Activated CD8-positive, alpha-beta T cell treated with anti-CD3 and anti-CD28 coated beads, Interleukin-2, amount 10 ng/mL, durations not matched to agents 7 days and 5 days (primary cell): ENCODE measurements at regions of chr10 and their contacts with region 1.

Region 1: DNA sequence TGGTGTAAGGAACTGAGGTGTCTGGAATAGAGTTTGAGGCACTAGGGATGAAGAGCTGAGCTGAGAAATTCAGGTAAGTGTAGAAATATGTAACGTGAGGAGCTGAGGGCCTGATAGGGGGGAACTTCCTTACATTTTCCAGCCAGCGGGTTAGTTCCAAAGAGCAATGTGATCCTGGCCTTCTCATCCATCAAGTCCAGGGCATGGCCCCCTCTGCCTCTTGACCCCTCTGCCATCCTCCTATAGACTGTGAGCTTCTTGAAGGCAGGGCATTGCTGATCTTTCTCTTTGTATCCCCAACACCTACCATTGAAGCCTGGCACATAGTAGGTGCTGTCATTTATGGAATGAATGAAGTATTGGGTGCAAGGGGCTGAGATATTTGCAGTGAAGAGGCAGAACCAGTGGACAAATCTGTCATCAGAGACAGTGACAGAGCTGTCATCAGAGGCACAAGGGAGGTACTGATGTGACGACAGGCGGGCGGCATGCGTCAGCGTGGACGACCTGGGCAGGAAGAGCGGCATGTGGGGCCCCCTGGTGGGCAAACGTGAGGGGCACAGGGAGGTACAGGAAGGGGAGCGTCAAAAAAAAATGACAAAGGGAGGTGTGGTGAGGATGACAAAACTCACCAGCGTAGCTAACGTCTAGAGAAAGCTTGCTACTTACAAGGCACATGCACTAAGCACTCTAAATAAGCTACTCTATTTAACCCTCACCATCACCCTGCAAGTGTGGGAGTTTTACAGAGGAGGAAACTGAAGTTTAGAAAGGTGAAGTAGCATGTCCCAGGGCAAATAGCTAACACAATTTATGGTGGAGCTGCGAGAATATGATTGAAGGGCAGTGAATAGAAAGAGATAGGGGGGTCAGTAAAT is 5.2 kb upstream of the CAMK2G start:
- DNase-seq: peak; percentile 97
- ATAC-seq: peak; percentile 93
- H3K4me3 Mint-ChIP-seq: no peak overlapping the region
- H3K27ac Mint-ChIP-seq: peak overlapping the region; percentile 61
- H3K4me1 Mint-ChIP-seq: peaks cover 53% of the 10 kb centered on the region
- H3K27me3 Mint-ChIP-seq: peaks cover 6% of the 10 kb centered on the region

Region 2: GRCh38 chr10:73743905-73744663 is 135.5 kb before region 1 on chr10 and contains the start of gene SEC24C:
- CTCF ChIA-PET with region 1: interaction called, 11 read pairs
- POLR2A ChIA-PET with region 1: interaction called, 5 read pairs
- DNase-seq: peak; percentile 97
- ATAC-seq: peak; percentile 95
- H3K4me3 Mint-ChIP-seq: peak within 1 kb of the TSS; percentile 99
- H3K27ac Mint-ChIP-seq: peak within 1 kb of the TSS; percentile 100
- H3K4me1 Mint-ChIP-seq: peaks cover 30% of the 10 kb centered on the region
- H3K27me3 Mint-ChIP-seq: no peaks in the 10 kb centered on the region
- total RNA-seq, gene SEC24C: 88.9 to 94.6 TPM

Region 3: DNA sequence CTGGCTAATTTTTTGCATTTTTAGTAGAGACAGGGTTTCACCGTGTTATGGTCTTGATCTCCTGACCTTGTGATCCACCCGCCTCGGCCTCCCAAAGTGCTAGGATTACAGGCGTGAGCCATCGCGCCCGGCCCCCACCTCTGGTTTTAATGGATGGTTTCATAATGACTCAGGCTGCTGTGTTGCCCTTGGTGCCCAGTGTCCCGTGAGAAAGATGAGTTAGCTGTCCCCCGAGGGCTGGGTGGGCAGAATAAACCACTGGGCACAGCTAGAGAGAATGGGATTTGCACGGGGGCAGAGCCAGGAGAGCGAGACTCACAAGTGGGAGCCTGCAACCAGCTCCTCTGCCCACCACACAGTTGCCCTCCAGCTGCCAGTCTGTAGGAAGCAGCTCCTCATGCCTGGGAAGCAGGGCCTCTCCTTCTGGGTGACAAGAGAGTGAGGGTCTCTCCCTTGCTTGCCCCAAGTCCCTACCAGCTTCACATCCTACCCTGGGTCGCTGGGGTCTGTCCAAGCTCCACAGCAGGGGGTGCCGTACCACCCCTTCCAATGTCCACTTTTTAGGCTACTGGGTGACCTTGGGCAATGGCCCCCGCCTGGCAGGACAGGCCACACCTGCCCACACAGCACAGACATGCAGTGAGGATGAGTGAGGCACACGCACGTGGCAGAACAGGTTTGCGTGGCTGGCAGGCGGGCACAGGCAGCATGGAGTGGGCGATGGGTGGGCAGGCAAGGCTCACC is 52.0 kb before region 1 on chr10:
- CTCF ChIA-PET with region 1: interaction called, 11 read pairs
- POLR2A ChIA-PET with region 1: no interaction called
- DNase-seq: no peak
- ATAC-seq: no peak
- H3K4me3 Mint-ChIP-seq: no peak overlapping the region
- H3K27ac Mint-ChIP-seq: no peak overlapping the region
- H3K4me1 Mint-ChIP-seq: no peaks in the 10 kb centered on the region
- H3K27me3 Mint-ChIP-seq: no peaks in the 10 kb centered on the region

Region 4: GRCh38 chr10:73865459-73866442 is 13.8 kb before region 1 on chr10:
- CTCF ChIA-PET with region 1: interaction called, 228 read pairs
- POLR2A ChIA-PET with region 1: interaction called, 14 read pairs
- DNase-seq: peak; percentile 72
- ATAC-seq: peak; percentile 81
- H3K4me3 Mint-ChIP-seq: peak overlapping the region; percentile 80
- H3K27ac Mint-ChIP-seq: peak overlapping the region; percentile 91
- H3K4me1 Mint-ChIP-seq: peaks cover 83% of the 10 kb centered on the region
- H3K27me3 Mint-ChIP-seq: no peaks in the 10 kb centered on the region

Region 5: DNA sequence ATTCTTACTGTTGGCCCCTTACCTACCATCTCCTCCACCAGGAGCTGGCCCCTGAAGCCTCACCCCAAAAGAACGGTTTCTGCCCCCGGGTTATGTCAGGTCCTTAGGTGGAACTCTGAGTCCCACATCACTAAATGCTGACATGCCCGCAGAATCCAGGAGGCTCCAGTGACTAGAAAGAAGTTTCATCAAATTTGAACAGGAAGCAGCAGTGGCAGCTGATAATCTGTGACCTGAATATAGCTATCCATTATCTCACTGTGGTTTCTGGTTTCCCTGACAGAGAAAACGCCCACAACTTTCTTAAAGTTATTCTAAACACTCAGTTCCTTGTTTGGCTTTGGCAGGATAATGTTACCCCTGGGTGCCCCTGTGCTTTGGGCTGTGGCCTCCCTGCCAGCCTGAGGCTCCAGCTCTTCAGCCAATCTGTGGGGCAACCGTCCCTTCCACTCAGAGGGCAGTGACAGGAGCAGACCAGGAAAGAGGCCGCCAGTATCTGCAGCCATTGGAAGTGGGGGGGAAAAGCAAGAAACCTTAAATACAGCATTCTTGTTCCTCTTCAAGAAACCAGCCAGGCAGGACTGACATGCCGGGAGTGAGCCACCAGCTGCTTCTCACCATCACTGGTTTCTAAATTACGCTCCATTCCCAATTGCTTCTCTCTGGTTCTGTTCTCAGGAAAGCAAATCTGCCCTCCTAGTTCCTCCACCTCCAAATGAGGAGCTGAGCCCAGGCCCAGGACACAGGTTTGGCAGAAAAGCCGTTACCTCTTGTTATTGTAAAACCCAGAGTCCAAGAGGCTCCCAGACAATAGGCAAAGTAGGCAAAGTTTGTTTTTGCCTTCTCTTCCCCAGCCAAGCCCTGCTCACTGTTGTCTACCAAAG is 77.2 kb after region 1 on chr10:
- CTCF ChIA-PET with region 1: interaction called, 12 read pairs
- POLR2A ChIA-PET with region 1: no interaction called
- DNase-seq: peak; percentile 62
- ATAC-seq: peak; percentile 76
- H3K4me3 Mint-ChIP-seq: peak overlapping the region; percentile 60
- H3K27ac Mint-ChIP-seq: peak overlapping the region; percentile 89
- H3K4me1 Mint-ChIP-seq: peaks cover 53% of the 10 kb centered on the region
- H3K27me3 Mint-ChIP-seq: peaks cover 2% of the 10 kb centered on the region

Region 6: DNA sequence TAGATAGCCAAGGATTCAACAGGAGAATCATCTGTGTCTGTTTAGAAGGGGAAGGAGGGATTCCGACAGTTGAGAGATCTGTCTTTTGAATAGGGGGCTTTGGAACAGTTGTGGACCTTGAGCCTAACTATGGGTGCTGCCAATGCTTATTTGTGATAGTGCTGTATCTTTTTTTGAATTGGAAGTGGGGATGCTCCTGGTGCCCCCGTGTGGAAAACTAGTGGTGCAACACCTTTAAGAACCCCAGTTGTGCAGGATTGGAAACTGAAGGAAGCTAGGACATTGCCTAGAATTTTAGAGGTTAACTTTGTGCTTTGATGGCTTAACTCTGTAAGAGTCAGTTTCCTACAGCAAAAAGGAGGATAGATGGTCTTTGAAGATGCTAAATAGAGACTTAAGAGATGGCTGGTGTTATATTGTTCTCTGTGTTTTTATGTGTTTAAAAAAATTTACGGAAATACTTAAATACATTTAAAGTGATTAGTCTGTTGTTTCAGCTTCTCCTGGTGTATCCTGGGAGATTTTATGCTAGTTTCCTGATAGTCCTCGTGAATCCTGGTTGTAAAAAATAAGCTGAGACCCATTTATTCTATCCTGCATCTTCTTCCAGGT is 201.8 kb after region 1 on chr10:
- CTCF ChIA-PET with region 1: interaction called, 25 read pairs
- POLR2A ChIA-PET with region 1: no interaction called
- DNase-seq: peak; percentile 64
- ATAC-seq: no peak
- H3K4me3 Mint-ChIP-seq: no peak overlapping the region
- H3K27ac Mint-ChIP-seq: peak overlapping the region; percentile 17
- H3K4me1 Mint-ChIP-seq: peaks cover 41% of the 10 kb centered on the region
- H3K27me3 Mint-ChIP-seq: no peaks in the 10 kb centered on the region